Gastrocnemius medialis (tissue), 4 donors: ENCODE measurements at regions of chr20 and their contacts with region 1.

Region 1: DNA sequence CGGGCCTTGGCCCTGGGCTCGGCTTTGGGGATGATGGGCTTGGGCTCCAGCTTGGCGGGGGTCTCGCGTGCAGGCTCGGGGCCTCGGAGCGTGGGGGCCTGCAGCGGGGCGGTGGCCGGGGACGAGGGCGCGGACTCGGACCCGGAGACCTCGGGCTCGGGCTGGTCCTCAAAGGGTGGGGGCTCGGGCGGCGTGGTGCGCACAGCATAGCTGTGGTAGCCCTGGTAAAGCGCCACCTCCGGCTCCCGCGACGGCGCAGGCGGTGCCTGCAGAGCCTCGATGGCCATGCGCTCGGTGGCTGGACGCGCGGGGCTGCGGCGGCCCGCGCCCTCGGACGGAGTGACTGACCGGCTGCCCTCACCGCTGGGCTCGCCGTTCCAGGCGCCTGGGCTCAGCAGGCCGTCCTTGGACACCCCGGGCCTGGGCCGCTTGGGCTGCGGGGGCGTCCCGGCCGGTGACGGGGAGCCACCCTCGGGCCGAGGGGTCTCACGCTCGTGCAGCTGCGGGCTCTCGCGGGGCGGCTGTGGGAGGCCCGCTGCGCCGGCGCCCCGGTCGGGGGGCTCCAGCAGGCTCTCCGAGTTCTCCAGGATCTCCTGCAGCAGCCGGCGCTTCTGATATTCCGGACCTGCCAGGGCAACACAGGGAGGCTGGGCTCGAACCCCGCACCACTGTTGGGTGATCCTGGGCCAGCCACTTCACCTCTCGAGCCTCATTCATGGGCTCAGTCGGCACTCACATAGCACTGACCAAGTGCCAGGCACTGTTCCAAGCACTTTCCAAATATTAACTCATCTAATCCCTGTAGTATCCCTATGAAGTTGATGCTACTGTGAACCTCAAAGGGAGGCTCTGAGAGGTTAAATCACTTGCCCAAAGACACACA is 71.0 kb downstream of the JPH2 start:
- DNase-seq: no peak
- ATAC-seq: peak in 1 of 2 donors; percentile 25
- H3K4me3 ChIP-seq: no peak overlapping the region
- H3K27ac ChIP-seq: peak overlapping the region; percentile 17 to 74 (median 40)
- H3K4me1 ChIP-seq: peaks cover 13 to 15% of the 10 kb centered on the region in 2 donors
- H3K27me3 ChIP-seq: no peaks in the 10 kb centered on the region
- CTCF ChIP-seq: no peak
- POLR2A ChIP-seq: no peak

Region 2: DNA sequence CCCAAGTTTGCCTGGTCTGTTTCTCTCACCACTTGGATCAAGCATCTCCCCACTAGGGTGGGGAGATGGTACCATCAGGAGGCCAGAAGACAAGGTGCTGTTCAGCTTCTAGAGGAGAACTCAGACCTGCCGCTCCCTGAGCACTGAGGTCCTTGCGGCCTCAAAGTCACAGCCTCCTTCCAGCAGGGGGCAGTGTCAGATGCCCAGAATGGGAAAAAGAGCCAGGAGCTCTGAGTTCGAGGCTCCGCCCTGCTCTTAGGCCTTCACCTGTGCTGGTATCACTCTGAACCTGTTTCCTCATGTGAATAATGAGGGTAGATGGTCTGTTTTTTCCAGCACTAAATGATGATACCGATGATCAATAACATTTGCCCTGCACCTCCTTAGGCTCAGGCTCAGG is 132.6 kb before region 1 on chr20:
- in situ Hi-C with region 1: no loop called
- intact Hi-C with region 1: no loop called
- DNase-seq: no peak
- ATAC-seq: no peak
- H3K4me3 ChIP-seq: no peak overlapping the region
- H3K27ac ChIP-seq: no peak overlapping the region
- H3K4me1 ChIP-seq: no peaks in the 10 kb centered on the region
- H3K27me3 ChIP-seq: no peaks in the 10 kb centered on the region
- CTCF ChIP-seq: no peak
- POLR2A ChIP-seq: no peak

Region 3: DNA sequence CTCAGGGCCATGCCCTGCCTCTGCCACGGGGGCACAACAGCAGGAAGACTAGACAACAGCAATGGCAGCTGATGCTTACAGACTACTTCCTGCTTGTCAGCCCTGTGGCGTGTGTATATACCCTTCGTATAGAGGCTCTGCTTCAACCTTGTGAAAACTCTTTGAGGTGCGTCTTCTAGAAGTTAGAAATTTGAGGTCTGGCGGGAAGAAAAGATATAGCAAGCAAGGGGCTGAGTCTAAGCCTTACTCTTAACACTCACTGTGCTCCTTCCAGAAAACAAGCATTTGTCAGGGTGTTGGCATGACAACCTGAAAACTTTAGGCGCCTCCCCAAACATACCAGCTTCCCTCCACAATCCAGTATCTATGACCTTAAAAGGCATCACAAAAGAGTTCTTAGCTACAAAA is 37.6 kb after region 1 on chr20:
- in situ Hi-C with region 1: no loop called
- intact Hi-C with region 1: loop called (anchors 2 kb)
- DNase-seq: peak in 1 of 2 donors; percentile 3
- ATAC-seq: no peak
- H3K4me3 ChIP-seq: no peak overlapping the region
- H3K27ac ChIP-seq: peak overlapping the region; percentile 90 to 93 (median 92)
- H3K4me1 ChIP-seq: peaks cover 60 to 70% of the 10 kb centered on the region in 2 donors
- H3K27me3 ChIP-seq: no peaks in the 10 kb centered on the region
- CTCF ChIP-seq: no peak
- POLR2A ChIP-seq: no peak

Region 4: DNA sequence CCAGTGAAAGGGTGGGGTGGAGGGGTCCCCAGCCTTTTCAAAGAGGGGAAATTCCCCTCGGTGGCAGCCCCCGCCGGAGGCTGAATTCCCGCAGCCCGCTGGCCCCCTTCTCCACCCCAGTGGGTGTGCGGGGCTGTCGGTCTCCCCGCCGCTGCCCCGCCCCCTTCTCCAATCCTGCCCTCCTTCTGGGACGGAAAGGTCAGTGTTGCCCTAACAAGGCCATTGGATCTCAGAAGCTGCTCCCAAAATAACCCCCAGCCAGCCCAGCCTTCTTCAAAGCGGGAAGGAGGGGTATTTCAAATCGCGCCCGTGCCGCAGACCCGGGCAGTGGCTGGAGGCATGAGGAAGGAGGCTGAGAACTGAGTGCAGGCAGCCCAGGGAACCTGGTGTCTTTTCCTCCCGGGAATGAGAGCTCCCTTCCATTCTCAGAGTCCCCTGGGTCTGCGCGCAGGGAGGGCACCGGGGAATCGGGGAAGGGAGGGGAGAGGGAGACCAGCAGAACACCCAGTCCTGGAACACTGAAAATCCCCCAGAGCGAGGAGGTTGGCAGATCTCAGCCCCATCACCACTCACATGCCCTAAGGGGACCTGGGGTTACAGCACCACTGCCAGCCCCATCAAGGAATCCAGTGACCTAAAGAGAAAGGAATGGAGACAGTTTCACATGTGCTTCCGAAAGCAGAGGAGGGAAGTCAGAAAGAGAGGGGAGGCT is 71.2 kb after region 1 on chr20 and contains the start of gene JPH2:
- in situ Hi-C with region 1: loop called (anchors 5 kb)
- intact Hi-C with region 1: loop called (anchors 1 kb)
- DNase-seq: peak; percentile 79 to 91
- ATAC-seq: peak; percentile 65 to 70
- H3K4me3 ChIP-seq: peak within 1 kb of the TSS; percentile 70 to 77 (median 73)
- H3K27ac ChIP-seq: peak within 1 kb of the TSS; percentile 92 to 98 (median 96)
- H3K4me1 ChIP-seq: peaks cover 56 to 65% of the 10 kb centered on the region in 2 donors
- H3K27me3 ChIP-seq: no peaks in the 10 kb centered on the region
- CTCF ChIP-seq: no peak
- POLR2A ChIP-seq: peak; percentile 60 to 81
- total RNA-seq, gene JPH2: 18.3 to 86.6 (median 38.0) TPM

Region 5: GRCh38 chr20:44193801-44194200 is 77.8 kb after region 1 on chr20:
- in situ Hi-C with region 1: loop called (anchors 5 kb)
- intact Hi-C with region 1: loop called (anchors 1 kb)
- DNase-seq: no peak
- ATAC-seq: no peak
- H3K4me3 ChIP-seq: no peak overlapping the region
- H3K27ac ChIP-seq: no peak overlapping the region
- H3K4me1 ChIP-seq: peaks cover 12 to 13% of the 10 kb centered on the region in 2 donors
- H3K27me3 ChIP-seq: no peaks in the 10 kb centered on the region
- CTCF ChIP-seq: no peak
- POLR2A ChIP-seq: no peak